Caco-2 (cell line): ENCODE measurements at regions of chrX and their contacts with region 1.

Region 1: GRCh38 chrX:44828008-44828605 is 15.7 kb upstream of the DUSP21 start:
- DNase-seq: no peak
- H3K4me3 ChIP-seq: no peak overlapping the region
- H3K4me3 Mint-ChIP-seq: no peak overlapping the region
- H3K27ac Mint-ChIP-seq: no peak overlapping the region
- H3K4me1 ChIP-seq: no peaks in the 10 kb centered on the region
- H3K4me1 Mint-ChIP-seq: no peaks in the 10 kb centered on the region
- H3K27me3 ChIP-seq: no peaks in the 10 kb centered on the region
- H3K27me3 Mint-ChIP-seq: no peaks in the 10 kb centered on the region
- CTCF ChIP-seq: no peak

Region 2: GRCh38 chrX:44451056-44451455 is 377.1 kb before region 1 on chrX:
- CTCF ChIA-PET with region 1: no interaction called
- POLR2A ChIA-PET with region 1: interaction called, 11 read pairs
- intact Hi-C with region 1: no loop called
- DNase-seq: no peak
- H3K4me3 ChIP-seq: no peak overlapping the region
- H3K4me3 Mint-ChIP-seq: no peak overlapping the region
- H3K27ac Mint-ChIP-seq: no peak overlapping the region
- H3K4me1 ChIP-seq: no peaks in the 10 kb centered on the region
- H3K4me1 Mint-ChIP-seq: no peaks in the 10 kb centered on the region
- H3K27me3 ChIP-seq: no peaks in the 10 kb centered on the region
- H3K27me3 Mint-ChIP-seq: no peaks in the 10 kb centered on the region
- CTCF ChIP-seq: no peak